K562 (cell line): ENCODE measurements at regions of chr7 and their contacts with region 1.

Region 1: DNA sequence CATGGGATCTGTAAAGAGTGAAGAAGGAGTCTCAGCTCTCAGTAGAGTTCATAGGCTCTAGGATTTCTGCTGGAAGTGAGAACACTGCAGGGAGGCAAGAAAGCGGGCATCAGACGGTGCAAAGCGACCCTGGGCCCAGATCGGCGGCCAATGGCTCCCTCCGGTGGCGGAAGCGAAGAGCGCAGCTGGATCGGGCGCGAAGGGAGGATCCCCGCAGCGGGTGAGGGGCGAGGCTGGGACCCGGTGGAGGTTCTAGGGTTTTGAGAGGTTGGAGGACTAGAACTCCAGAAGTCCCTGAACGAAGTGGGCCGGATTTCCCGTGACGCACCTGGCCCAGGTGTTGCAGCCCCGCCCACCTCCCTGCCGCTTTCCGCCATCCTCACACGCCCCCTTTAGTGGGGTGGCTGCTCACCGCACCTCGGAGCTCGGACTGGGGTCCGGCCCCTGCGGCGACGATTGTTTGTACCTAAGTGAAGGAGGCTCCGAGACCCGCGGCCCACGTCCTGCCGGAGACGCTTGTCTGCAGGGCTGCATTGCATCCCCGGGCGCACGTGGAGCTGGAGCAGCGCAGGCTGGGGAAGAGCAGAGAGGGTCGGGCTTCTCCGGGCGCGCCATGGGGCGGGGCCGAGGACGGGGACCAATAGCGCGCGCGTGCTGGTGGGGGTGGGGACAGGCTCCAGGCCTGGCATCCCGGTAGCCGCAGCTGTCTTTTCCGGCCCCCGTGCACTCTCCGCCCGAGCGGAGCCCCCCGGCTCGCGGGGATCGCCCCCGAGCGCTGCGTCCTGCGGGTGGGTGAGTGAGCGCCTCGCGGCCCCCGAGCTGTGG is at the start of gene SLC12A9:
- DNase-seq: peak; percentile 97 to 98 (median 98)
- ATAC-seq: peak; percentile 100
- H3K4me3 ChIP-seq: peak within 1 kb of the TSS; percentile 62
- H3K27ac ChIP-seq: no peak within 1 kb of the TSS; the same call in 2 of the 3 replicates
- H3K4me1 ChIP-seq: peaks cover 4 to 32% of the 10 kb centered on the region in 2 experiments; a peak in 4 of 5 replicates
- H3K27me3 ChIP-seq: no peaks in the 10 kb centered on the region
- CTCF ChIP-seq: peak; percentile 96 to 99 (median 96)
- EP300 ChIP-seq: no peak
- POLR2A ChIP-seq: peak; percentile 54; the same call in 1 of the 2 replicates
- RAD21 ChIP-seq: peak; percentile 98
- polyA plus RNA-seq, gene SLC12A9: 0.06 to 0.17 TPM

Region 2: DNA sequence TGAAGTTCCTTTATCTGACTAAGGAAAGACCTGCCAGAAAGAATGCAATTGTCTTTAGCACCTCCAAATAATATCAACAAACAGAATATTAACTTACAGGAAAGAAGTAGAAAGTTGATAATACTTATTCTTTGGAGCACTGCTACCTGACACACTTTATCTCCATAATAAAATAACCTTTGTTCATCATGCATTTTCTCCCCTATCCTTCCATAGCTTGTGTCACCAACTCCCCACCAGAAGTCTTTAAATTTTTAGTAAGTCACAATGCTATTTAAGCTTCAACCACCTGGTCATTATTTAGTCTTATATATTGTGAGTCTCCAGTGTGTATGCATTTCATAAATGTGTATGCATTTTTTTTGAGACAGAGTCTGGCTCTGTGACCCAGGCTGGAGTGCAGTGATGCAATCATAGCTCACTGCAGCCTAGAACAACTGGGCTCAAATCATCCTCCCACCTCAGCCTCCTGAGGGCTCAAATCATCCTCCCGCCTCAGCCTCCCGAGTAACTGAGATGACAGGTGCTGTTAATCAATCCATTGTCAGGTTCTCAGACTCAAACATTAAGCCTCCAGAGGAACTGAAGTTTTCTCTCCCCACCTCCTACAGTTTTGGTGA is 1031.7 kb before region 1 on chr7:
- CTCF ChIA-PET with region 1: no interaction called
- POLR2A ChIA-PET with region 1: no interaction called
- in situ Hi-C with region 1: no loop called
- intact Hi-C with region 1: no loop called
- DNase-seq: no peak
- ATAC-seq: peak; percentile 17; the same call in 2 of the 3 replicates
- H3K4me3 ChIP-seq: no peak overlapping the region
- H3K27ac ChIP-seq: no peak overlapping the region
- H3K4me1 ChIP-seq: peaks cover 0 to 9% of the 10 kb centered on the region in 2 experiments; a peak in 3 of 5 replicates
- H3K27me3 ChIP-seq: no peaks in the 10 kb centered on the region
- CTCF ChIP-seq: no peak
- EP300 ChIP-seq: no peak
- POLR2A ChIP-seq: no peak
- RAD21 ChIP-seq: no peak

Region 3: GRCh38 chr7:100469227-100470044 is 382.8 kb before region 1 on chr7:
- CTCF ChIA-PET with region 1: no interaction called
- POLR2A ChIA-PET with region 1: no interaction called
- in situ Hi-C with region 1: no loop called
- intact Hi-C with region 1: loop called (anchors 5 kb)
- DNase-seq: peak; percentile 88 to 92 (median 90)
- ATAC-seq: peak; percentile 87
- H3K4me3 ChIP-seq: no peak overlapping the region
- H3K27ac ChIP-seq: no peak overlapping the region
- H3K4me1 ChIP-seq: peaks cover 17 to 52% of the 10 kb centered on the region in 2 experiments
- H3K27me3 ChIP-seq: no peaks in the 10 kb centered on the region
- CTCF ChIP-seq: peak; percentile 95 to 98 (median 98)
- EP300 ChIP-seq: no peak
- POLR2A ChIP-seq: 0 out of 2 replicates have a peak, but pooled peaks have one; percentile 18
- RAD21 ChIP-seq: peak; percentile 92 to 94

Region 4: DNA sequence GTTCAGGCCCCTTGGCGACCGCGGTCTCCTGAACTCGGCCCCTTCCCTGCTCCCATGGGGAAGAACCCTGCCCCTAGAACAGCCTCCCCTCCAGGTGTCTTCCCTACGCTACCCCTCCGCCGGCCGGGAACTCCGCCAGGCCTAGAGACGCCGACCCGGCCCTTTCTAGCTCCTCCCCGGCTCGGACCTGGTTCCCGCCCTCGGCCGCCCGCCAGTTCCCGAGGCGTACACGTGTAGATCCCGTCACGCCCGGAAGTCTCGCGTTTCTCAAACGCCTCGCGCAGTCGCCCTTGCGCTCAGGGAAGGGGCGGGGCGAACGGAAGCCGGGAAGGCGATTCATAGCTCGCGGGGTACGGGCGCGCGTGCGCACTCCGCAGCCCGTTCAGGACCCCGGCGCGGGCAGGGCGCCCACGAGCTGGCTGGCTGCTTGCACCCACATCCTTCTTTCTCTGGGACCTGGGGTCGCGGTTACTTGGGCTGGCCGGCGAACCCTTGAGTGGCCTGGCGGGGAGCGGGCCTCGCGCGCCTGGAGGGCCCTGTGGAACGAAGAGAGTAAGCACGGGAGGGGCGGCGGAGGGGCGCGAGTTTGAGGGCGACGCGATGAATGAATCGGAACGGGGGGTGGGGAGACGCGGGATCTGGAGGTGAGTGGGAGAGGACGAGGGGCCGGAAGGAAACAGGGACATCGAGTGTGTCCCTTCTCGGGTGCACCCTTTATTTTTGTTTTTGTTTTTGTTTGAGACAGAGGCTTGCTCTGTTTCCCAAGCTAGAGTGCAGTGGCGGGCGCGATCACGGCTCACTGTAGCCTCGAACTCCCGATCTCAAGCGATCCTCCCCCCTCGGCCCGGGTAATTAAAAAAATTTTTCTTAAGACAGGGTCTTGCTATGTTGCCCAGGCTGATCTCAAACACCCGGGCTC is 146.2 kb before region 1 on chr7 and contains the start of gene POP7:
- CTCF ChIA-PET with region 1: interaction called, 22 read pairs
- POLR2A ChIA-PET with region 1: interaction called, 11 read pairs
- in situ Hi-C with region 1: loop called (anchors 5 kb)
- intact Hi-C with region 1: loop called (anchors 1 kb)
- DNase-seq: peak; percentile 96 to 100 (median 98)
- ATAC-seq: peak; percentile 97
- H3K4me3 ChIP-seq: peak within 1 kb of the TSS; percentile 66
- H3K27ac ChIP-seq: peak within 1 kb of the TSS; percentile 83
- H3K4me1 ChIP-seq: peaks cover 6 to 27% of the 10 kb centered on the region in 2 experiments; a peak in 4 of 5 replicates
- H3K27me3 ChIP-seq: 0 out of 5 replicates have a peak, but pooled peaks cover 3 to 4% of the 10 kb centered on the region in 2 experiments
- CTCF ChIP-seq: no peak; a peak in 1 of 6 replicates
- EP300 ChIP-seq: 0 out of 2 replicates have a peak, but pooled peaks have one; percentile 31
- POLR2A ChIP-seq: peak; percentile 96
- RAD21 ChIP-seq: no peak
- polyA plus RNA-seq, gene POP7: 11.5 to 27.1 TPM

Region 5: GRCh38 chr7:100753750-100754149 is 98.5 kb before region 1 on chr7:
- CTCF ChIA-PET with region 1: no interaction called
- POLR2A ChIA-PET with region 1: no interaction called
- in situ Hi-C with region 1: no loop called
- intact Hi-C with region 1: no loop called
- DNase-seq: no peak
- ATAC-seq: no peak
- H3K4me3 ChIP-seq: no peak overlapping the region
- H3K27ac ChIP-seq: no peak overlapping the region
- H3K4me1 ChIP-seq: peaks cover 0 to 5% of the 10 kb centered on the region in 2 experiments; a peak in 2 of 5 replicates
- H3K27me3 ChIP-seq: peaks cover 38 to 54% of the 10 kb centered on the region in 2 experiments
- CTCF ChIP-seq: no peak
- EP300 ChIP-seq: no peak
- POLR2A ChIP-seq: no peak
- RAD21 ChIP-seq: no peak

Region 6: DNA sequence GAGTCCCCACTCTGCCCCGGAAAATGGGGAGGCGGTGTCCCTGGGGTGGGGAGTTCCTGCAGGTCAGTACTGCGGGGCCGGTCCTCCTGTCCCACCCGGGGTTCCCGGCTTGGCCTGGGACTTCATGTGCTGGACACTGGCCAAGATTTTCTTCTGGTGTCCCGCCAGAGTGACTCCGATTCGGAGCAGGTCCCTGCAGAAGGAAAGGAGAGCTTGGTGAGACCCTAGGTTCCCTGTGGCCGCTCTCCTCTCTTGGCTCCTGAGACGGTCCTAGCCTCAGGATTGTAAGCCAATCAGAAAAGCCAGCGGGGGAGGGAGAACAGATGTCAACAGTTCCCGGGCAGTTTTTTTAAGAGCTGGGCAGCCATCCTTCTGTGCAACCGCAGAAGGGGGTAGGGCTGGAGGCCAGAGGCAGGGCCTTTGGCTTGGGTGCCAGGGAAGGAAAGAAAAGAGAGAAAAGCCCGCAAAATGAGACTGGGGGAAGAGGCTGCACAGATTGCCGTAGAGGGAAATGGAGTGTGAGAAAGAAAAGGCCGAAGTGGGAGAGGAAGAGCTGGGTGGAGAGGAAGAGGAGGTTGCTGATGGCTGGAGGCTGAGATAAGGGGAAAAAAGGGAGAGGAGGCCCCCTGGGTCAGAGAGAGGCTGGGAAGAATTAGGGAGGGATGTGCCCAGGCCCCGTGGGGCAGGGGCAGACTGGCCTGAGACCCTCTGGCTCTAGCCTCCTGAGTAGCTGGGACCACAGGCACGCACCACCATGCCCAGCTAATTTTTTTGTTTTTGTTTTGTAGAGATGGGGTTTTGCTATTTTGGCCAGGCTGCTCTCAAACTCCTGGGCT is 48.6 kb before region 1 on chr7:
- CTCF ChIA-PET with region 1: interaction called, 47 read pairs
- POLR2A ChIA-PET with region 1: interaction called, 10 read pairs
- in situ Hi-C with region 1: no loop called
- intact Hi-C with region 1: loop called (anchors 1 kb)
- DNase-seq: peak; percentile 80 to 86 (median 84)
- ATAC-seq: peak; percentile 68
- H3K4me3 ChIP-seq: no peak overlapping the region
- H3K27ac ChIP-seq: peak overlapping the region; percentile 39; the same call in 1 of the 3 replicates
- H3K4me1 ChIP-seq: peaks cover 46 to 66% of the 10 kb centered on the region in 2 experiments
- H3K27me3 ChIP-seq: no peaks in the 10 kb centered on the region
- CTCF ChIP-seq: no peak
- EP300 ChIP-seq: peak; percentile 16; the same call in 1 of the 2 replicates
- POLR2A ChIP-seq: 0 out of 2 replicates have a peak, but pooled peaks have one; percentile 27
- RAD21 ChIP-seq: no peak

Region 7: GRCh38 chr7:100827330-100828227 is 24.7 kb before region 1 on chr7 and contains the start of gene EPHB4:
- CTCF ChIA-PET with region 1: interaction called, 5 read pairs
- POLR2A ChIA-PET with region 1: interaction called, 5 read pairs
- in situ Hi-C with region 1: no loop called
- intact Hi-C with region 1: loop called (anchors 1 kb)
- DNase-seq: peak; percentile 89 to 97 (median 91)
- ATAC-seq: peak; percentile 72
- H3K4me3 ChIP-seq: peak within 1 kb of the TSS; percentile 71
- H3K27ac ChIP-seq: peak within 1 kb of the TSS; percentile 60
- H3K4me1 ChIP-seq: peaks cover 17 to 61% of the 10 kb centered on the region in 2 experiments; a peak in 4 of 5 replicates
- H3K27me3 ChIP-seq: no peaks in the 10 kb centered on the region
- CTCF ChIP-seq: peak; percentile 77 to 88 (median 80)
- EP300 ChIP-seq: no peak
- POLR2A ChIP-seq: peak; percentile 74
- RAD21 ChIP-seq: peak; percentile 31 to 63; a peak in 2 of 4 replicates
- polyA plus RNA-seq, gene EPHB4: 1.2 to 1.5 TPM

Region 8: DNA sequence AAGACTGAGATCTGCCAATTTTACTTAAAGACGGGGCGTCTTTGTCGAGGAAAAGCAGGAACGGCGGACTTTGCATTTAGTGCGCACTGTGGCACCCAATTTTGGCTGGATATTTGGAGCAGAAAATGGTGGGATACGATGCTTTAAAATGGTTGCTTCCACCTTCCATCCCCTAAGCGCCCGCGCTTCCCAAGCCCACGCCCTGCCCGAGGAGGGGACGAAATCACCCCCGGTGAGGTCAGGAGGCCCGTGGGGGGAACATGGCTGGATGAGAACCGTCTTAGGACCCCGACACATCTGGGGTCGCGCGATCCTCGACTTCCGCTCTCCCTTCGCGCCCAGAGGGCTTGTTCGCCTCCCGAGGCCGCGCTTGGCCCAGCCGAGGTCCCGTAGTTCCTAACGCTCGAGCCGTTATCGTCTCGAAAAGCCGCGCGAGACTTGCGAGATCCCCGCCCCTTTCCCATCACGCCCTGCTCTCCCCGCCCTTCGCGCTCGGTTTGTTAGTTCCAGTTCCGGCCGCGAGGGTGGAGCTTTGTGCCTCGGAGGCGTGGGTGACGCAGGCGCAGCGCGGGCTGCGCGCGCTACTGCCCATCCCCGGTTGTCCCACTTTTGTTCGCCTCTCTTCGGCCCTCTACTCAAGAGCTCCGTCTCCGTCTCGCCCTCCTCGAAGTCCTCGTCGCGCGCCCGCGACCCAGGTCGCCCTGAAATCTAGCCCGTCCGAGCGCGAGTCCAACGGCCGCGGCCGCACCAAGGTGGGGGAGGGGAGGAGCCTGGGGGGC is 22.5 kb after region 1 on chr7 and contains the start of gene SRRT:
- CTCF ChIA-PET with region 1: no interaction called
- POLR2A ChIA-PET with region 1: interaction called, 19 read pairs
- in situ Hi-C with region 1: no loop called
- intact Hi-C with region 1: no loop called
- DNase-seq: peak; percentile 96 to 100 (median 98)
- ATAC-seq: peak; percentile 97
- H3K4me3 ChIP-seq: peak within 1 kb of the TSS; percentile 100
- H3K27ac ChIP-seq: peak within 1 kb of the TSS; percentile 96
- H3K4me1 ChIP-seq: peaks cover 20 to 48% of the 10 kb centered on the region in 2 experiments; a peak in 4 of 5 replicates
- H3K27me3 ChIP-seq: no peaks in the 10 kb centered on the region
- CTCF ChIP-seq: peak; percentile 37 to 41 (median 41); a peak in 4 of 6 replicates
- EP300 ChIP-seq: peak; percentile 56
- POLR2A ChIP-seq: peak; percentile 98
- RAD21 ChIP-seq: 0 out of 4 replicates have a peak, but pooled peaks of 1 of the 2 experiments have one; percentile 3
- polyA plus RNA-seq, gene SRRT: 10.3 to 16.7 TPM